Heart right ventricle (tissue), 16 donors: ENCODE measurements at regions of chr6 and their contacts with region 1.

Region 1: GRCh38 chr6:54846857-54847671 is 493 bp downstream of the FAM83B start:
- DNase-seq: peak in 1 of 2 donors; percentile 19
- ATAC-seq: peak in 5 of 8 donors; percentile 21 to 54 (median 31)
- H3K4me3 ChIP-seq: peak overlapping the region; percentile 20 to 55 (median 48)
- H3K27ac ChIP-seq: peak overlapping the region in 2 of 10 donors; percentile 30 to 52
- H3K4me1 ChIP-seq: peaks cover 0 to 5% (median 0%) of the 10 kb centered on the region in 9 donors
- H3K27me3 ChIP-seq: peaks cover 11 to 41% (median 23%) of the 10 kb centered on the region in 7 donors
- CTCF ChIP-seq: no peak

Region 2: DNA sequence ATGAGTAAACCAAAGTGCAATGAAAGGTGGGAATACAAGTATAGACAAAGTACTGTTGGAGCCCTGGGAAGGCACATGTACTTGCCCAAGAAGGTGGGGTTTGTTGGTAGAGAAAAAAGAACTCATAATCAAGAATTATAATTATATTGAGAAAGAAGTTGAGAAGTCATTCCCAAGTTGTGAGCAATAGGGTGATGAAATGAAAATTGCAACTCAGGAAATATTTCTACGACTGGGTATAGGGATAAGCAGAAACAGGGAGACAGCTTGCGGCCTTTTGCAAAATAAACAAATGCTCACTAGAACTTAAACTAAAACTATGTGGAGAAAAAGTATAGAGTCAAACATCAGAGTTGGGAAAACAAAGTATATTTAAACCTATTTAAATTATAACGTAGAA is 251.2 kb before region 1 on chr6:
- intact Hi-C with region 1: no loop called
- DNase-seq: no peak
- ATAC-seq: no peak
- H3K4me3 ChIP-seq: no peak overlapping the region
- H3K27ac ChIP-seq: no peak overlapping the region
- H3K4me1 ChIP-seq: no peaks in the 10 kb centered on the region
- H3K27me3 ChIP-seq: no peaks in the 10 kb centered on the region
- CTCF ChIP-seq: no peak

Region 3: DNA sequence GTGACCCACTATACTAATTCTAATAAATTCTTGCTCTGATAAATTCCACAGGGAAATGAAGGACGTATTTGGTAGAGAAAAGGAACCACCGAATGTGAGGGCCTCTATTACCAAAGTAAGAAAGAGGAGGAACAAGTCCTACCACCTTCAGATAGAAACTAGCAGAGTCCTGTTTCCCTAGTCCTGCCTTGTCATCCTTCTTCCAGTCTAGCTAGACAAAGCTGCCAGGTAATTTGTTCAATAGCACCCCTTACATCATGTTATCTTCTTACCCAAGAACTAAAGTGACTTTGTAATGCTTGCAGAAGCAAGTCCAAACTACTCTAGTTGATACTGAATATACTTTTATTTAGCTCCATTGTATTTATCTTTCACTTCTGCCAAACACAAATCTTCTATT is 29.8 kb before region 1 on chr6:
- intact Hi-C with region 1: loop called in 1 of 10 experiments (anchors 1 kb)
- DNase-seq: no peak
- ATAC-seq: no peak
- H3K4me3 ChIP-seq: no peak overlapping the region
- H3K27ac ChIP-seq: no peak overlapping the region
- H3K4me1 ChIP-seq: no peaks in the 10 kb centered on the region
- H3K27me3 ChIP-seq: no peaks in the 10 kb centered on the region
- CTCF ChIP-seq: no peak